WTC11 (cell line): ENCODE measurements at regions of chr9 and their contacts with region 1.

Region 1: DNA sequence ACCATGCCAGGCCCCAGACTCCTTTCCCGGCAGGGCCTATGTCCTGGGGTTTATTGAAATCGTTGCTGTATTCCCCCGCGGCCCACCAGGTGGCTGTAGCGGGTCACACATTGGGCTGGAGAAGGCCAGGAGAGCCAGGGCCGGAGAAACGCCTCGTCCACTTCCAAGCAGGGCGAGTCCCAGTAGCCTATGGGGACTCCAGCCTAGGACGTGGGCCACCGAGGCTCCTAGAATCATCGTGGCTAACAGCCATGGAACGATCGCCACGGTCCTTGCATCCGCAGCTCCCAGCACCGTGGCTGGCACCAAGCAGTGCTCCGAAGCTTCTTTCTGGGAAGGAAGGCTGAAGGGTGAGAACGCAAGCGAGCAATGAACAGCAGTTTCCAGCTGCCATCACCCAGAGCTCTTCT is 87.7 kb downstream of the ENTREP1 start:
- DNase-seq: peak; percentile 90
- ATAC-seq: peak; percentile 97
- H3K4me3 Mint-ChIP-seq: no peak overlapping the region
- H3K27ac Mint-ChIP-seq: no peak overlapping the region
- H3K4me1 Mint-ChIP-seq: peaks cover 46% of the 10 kb centered on the region
- H3K27me3 Mint-ChIP-seq: no peaks in the 10 kb centered on the region; the same call in 1 of the 2 replicates
- CTCF ChIP-seq: peak; percentile 53

Region 2: DNA sequence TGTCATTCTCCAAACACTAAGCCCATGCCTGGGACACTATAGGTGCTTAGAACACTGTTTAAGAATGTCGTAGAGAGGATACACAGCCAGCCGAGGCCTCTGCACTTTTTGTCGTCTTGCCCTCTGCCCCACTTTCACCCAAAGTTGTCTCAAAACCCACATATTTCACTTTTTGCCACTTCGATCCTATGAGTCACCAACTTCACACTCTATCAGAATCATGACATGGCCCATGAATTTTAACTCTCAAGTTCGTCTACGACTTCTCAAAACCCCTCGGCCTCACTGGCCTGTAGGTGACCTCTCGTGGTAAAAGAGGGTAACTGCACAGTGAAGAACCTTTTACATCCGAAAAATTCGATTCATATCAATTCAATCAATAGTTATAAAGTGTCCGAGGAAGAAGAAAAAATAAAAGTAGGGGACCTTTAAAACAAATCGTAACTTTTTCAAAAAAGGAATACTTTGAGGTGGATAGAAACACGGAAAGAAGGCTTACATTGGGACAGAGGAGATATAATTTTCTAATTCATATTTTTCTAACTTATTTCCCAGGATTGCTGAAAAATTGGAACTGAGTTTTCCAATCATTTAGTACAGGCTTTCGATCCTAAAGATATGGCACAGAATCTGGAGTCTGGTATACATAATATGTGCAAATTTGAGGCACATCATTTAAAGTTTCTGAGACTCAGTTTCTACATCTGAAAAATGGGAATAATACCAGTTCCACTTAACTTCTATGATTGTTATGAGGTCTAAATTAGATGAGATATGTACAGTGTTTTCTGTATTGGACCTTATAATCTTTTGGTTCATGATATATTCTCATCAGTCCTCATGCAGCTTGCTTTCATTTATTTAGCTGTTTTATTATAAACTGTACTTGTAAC is 136.8 kb after region 1 on chr9:
- CTCF ChIA-PET with region 1: interaction called, 13 read pairs
- POLR2A ChIA-PET with region 1: no interaction called
- DNase-seq: no peak
- ATAC-seq: peak; percentile 67
- H3K4me3 Mint-ChIP-seq: no peak overlapping the region
- H3K27ac Mint-ChIP-seq: no peak overlapping the region
- H3K4me1 Mint-ChIP-seq: peaks cover 9% of the 10 kb centered on the region
- H3K27me3 Mint-ChIP-seq: no peaks in the 10 kb centered on the region
- CTCF ChIP-seq: peak; percentile 83